RWPE1 (cell line): ENCODE measurements at regions of chr6 and their contacts with region 1.

Region 1: DNA sequence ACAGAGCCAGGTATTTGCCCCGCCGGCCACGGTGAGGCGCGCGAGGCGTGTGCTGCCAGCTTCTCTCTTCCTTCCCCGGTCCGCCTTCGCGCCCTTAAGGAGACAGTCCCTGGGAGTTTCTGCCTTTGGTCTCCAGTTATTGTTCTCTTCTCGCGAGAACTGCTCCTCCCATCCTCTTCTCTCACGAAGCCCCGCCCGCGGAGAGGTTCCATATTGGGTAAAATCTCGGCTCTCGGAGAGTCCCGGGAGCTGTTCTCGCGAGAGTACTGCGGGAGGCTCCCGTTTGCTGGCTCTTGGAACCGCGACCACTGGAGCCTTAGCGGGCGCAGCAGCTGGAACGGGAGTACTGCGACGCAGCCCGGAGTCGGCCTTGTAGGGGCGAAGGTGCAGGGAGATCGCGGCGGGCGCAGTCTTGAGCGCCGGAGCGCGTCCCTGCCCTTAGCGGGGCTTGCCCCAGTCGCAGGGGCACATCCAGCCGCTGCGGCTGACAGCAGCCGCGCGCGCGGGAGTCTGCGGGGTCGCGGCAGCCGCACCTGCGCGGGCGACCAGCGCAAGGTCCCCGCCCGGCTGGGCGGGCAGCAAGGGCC is at the start of gene MAPK14:
- DNase-seq: peak; percentile 97
- H3K27ac ChIP-seq: peak within 1 kb of the TSS; percentile 92
- CTCF ChIP-seq: peak; percentile 94

Region 2: DNA sequence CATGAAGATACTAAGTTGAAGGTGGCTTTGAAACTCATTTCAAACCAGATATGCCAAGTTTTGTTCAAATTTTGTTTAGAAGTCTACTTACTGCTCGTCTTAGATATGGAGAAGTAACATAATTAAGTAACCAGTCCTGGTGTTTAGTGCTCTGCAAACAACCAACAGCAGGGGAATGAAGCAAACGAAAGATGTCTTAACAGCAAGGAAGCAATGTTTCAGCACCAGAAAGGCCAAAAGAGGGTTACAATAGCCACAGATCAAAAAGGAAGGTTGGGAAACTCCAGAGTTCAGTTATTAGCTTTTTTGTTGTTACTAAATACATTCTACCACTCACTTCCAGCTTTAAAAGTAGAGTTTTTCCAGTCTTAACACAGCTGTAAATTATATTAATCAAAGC is 177.4 kb before region 1 on chr6:
- CTCF ChIA-PET with region 1: no interaction called
- POLR2A ChIA-PET with region 1: no interaction called
- DNase-seq: no peak
- H3K27ac ChIP-seq: no peak overlapping the region
- CTCF ChIP-seq: no peak

Region 3: DNA sequence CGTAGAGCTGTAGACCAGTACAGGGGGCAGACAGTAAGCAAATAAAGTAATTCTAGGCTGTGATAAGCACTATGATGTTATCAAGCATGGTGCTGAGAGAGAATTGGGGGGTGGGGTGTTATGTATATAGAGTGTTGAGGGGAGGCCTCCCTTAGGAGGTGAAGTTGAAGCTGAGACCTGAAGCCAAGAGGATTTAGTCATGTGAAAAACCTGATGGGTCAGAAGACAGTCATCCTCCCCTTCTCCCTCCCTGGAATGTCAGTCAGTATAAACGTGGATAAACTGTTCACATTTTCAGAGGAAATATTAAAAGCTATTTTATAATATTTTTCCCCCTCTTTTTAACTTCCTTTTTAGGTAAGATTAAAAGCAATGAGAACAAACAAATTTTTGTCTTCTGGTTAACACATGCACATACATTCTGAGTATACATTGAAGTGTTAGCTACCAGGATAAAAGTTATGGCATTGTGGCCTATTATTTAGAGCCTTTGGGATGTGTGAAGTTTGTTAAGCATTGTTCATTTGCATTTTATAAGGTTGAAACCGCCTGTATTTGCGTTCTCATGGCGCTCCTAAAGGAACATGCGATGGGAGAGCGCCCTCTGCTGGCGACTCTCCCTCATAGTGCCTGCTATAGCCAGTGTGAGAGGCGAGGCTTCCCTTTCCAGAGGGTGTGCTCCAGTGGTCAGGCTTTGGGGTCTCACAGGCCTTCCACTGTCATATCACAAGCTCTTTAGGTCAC is 67.3 kb after region 1 on chr6:
- CTCF ChIA-PET with region 1: interaction called, 20 read pairs
- POLR2A ChIA-PET with region 1: interaction called, 5 read pairs
- DNase-seq: peak; percentile 74
- H3K27ac ChIP-seq: no peak overlapping the region
- CTCF ChIP-seq: peak; percentile 93

Region 4: GRCh38 chr6:36268478-36269275 is 241.1 kb after region 1 on chr6:
- CTCF ChIA-PET with region 1: no interaction called
- POLR2A ChIA-PET with region 1: no interaction called
- DNase-seq: no peak
- H3K27ac ChIP-seq: no peak overlapping the region
- CTCF ChIP-seq: no peak

Region 5: DNA sequence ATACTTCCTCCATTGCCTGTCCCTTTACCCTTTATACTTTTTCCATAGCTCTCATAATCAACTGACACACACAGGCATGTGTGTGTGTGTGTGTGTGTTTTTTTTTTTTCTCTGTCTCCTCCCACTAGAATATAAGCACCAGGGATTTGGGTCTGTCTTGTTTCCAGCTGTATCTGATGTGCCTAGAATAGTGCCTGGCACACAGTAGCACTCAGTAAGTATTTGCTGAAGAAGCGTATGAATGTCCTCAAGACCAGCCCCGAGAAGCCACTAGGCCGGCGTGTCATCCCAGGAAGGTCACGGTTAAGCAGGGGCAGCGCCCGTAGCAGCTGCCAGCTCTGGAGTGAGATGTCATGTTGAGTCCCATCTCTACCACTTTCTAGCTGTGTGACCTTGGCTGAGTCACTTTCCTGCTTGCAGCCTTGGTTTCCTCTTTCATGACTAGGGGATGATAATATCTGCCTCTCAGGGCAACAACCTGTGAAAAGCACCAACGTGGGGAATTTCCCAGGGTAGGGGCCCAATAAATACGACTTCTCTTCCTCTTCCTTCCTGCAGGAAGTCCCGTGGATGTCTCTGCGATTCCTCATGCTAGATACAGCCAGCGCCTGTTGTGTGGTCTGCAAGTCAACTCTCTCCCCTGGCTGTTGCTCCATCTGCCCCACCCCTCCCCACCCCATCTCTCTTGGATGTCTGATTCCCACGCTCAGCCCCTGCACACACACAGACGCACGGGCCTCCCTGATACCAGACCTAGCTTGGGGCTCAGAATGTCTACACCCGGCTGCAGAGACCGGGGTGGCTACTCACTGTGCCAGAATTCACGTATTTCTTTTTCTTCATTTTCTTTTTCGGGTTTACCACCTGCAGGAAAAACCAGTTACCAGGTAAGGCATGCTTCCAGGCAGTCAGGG is 728.1 kb after region 1 on chr6:
- CTCF ChIA-PET with region 1: no interaction called
- POLR2A ChIA-PET with region 1: no interaction called
- DNase-seq: peak; percentile 49
- H3K27ac ChIP-seq: no peak overlapping the region
- CTCF ChIP-seq: no peak